PC-9 (cell line): ENCODE measurements at regions of chr20 and their contacts with region 1.

Region 1: DNA sequence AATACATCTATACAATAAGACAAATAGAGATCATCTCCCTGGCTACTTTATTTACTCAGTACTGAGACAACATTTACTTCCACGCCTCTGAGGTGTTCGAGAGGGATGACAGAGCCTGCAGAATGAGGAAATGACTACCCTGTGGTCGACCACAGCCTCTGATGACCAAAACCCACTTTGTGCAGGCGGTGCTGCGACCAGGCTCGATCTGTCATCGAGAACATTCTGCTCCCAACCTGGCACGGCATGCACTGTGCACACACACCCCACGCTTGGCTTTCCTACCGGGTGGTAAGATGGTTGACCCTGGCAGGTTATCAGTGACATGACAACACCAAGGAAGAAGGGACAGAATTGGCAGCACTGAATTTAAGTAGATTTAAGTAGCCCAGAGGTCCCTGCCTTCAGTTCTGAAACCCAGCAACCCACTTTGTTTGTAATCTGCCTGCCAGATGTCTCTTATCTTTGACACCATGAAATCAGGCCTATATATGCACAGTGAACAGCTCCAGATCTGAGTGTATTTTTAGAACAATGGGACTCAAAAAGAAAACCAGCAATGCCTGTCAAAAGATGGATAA is 42.6 kb downstream of the TTI1 start:
- DNase-seq: peak; percentile 74 to 80
- H3K4me3 ChIP-seq: no peak overlapping the region
- H3K27ac ChIP-seq: no peak overlapping the region
- H3K4me1 ChIP-seq: peaks cover 16% of the 10 kb centered on the region
- H3K27me3 ChIP-seq: no peaks in the 10 kb centered on the region
- CTCF ChIP-seq: no peak

Region 2: GRCh38 chr20:37564388-37565133 is 426.1 kb before region 1 on chr20:
- CTCF ChIA-PET with region 1: interaction called, 14 read pairs
- POLR2A ChIA-PET with region 1: no interaction called
- intact Hi-C with region 1: loop called (anchors 2 kb)
- DNase-seq: peak in 1 of 2 experiments; percentile 61
- H3K4me3 ChIP-seq: no peak overlapping the region
- H3K27ac ChIP-seq: no peak overlapping the region
- H3K4me1 ChIP-seq: no peaks in the 10 kb centered on the region
- H3K27me3 ChIP-seq: peaks cover 49% of the 10 kb centered on the region
- CTCF ChIP-seq: peak; percentile 95

Region 3: DNA sequence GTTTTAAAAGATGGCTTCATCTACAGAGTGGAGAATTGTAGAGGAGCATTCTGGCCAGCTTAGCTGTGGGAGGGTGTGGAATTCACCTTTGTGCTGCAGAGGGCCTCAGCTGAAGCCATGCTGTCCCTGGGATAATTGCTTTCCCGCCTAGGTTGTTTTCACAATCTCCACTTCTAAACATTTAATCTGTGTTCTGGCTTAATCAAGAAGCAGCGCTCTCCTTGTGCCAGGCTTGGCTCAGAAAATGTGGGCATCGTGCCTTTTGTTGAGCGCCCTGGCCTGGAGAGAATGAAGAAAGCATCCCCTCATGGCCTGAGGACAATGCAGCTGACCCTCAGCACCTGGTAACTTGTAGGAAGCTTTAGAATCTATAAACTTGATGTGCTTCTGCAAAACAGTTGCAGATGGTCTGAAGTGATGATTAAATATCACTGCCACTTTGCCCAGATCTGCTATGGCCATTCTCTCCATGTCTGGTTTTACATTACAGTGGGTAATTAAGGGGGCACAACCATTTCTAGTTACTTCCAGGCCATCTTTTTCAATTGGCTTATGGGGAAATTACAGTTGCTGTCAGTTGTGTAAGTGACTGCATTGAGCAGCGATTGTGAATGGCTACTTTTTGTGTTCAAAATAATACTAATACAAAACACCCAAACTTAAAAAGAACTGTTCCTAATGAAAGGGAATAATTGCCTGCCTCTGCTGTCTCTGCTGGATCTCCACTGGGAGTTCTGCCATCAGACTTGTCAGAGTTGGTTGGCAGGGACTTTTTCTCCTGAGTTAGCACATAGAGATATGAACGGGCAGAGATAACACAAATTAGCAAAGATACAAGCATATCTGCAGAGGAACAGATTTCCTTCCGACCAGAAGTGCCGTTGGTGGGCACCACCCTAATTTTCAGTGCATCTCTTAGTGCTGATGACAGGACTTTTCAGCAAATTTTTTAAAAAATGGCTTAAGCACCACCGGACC is 278.4 kb before region 1 on chr20:
- CTCF ChIA-PET with region 1: no interaction called
- POLR2A ChIA-PET with region 1: interaction called, 10 read pairs
- intact Hi-C with region 1: loop called (anchors 1 kb)
- DNase-seq: no peak
- H3K4me3 ChIP-seq: no peak overlapping the region
- H3K27ac ChIP-seq: peak overlapping the region; percentile 59
- H3K4me1 ChIP-seq: peaks cover 20% of the 10 kb centered on the region
- H3K27me3 ChIP-seq: no peaks in the 10 kb centered on the region
- CTCF ChIP-seq: no peak

Region 4: GRCh38 chr20:37845241-37845711 is 145.4 kb before region 1 on chr20:
- CTCF ChIA-PET with region 1: interaction called, 12 read pairs
- POLR2A ChIA-PET with region 1: no interaction called
- intact Hi-C with region 1: no loop called
- DNase-seq: no peak
- H3K4me3 ChIP-seq: no peak overlapping the region
- H3K27ac ChIP-seq: no peak overlapping the region
- H3K4me1 ChIP-seq: no peaks in the 10 kb centered on the region
- H3K27me3 ChIP-seq: no peaks in the 10 kb centered on the region
- CTCF ChIP-seq: no peak

Region 5: GRCh38 chr20:37907677-37908401 is 82.8 kb before region 1 on chr20:
- CTCF ChIA-PET with region 1: interaction called, 20 read pairs
- POLR2A ChIA-PET with region 1: interaction called, 6 read pairs
- intact Hi-C with region 1: no loop called
- DNase-seq: peak; percentile 75 to 91
- H3K4me3 ChIP-seq: no peak overlapping the region
- H3K27ac ChIP-seq: no peak overlapping the region
- H3K4me1 ChIP-seq: peaks cover 14% of the 10 kb centered on the region; the same call in 1 of the 2 replicates
- H3K27me3 ChIP-seq: peaks cover 45% of the 10 kb centered on the region
- CTCF ChIP-seq: no peak

Region 6: DNA sequence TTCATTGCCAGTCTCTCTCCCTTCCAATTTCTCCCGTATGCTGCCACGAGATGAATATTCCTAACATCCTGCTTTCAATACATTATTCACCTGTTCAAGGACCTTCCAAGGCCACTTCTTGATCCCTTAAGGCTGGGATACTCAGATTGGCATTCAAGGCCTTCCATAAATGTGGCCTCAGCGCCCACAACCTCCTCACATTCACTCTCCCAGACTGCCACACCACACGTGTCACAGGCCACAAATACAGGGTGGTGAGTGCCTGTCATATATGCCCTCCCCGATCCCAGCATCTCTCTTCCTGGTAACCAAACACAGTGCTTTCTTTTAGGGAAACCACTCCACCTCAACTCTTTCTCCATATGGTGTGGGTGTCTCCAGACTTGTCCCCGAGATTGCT is 12.9 kb before region 1 on chr20:
- CTCF ChIA-PET with region 1: no interaction called
- POLR2A ChIA-PET with region 1: interaction called, 11 read pairs
- intact Hi-C with region 1: no loop called
- DNase-seq: no peak
- H3K4me3 ChIP-seq: no peak overlapping the region
- H3K27ac ChIP-seq: no peak overlapping the region
- H3K4me1 ChIP-seq: no peaks in the 10 kb centered on the region
- H3K27me3 ChIP-seq: no peaks in the 10 kb centered on the region
- CTCF ChIP-seq: no peak